ENCODE measurements at regions of chr5 and their contacts with region 1.

Region 1: DNA sequence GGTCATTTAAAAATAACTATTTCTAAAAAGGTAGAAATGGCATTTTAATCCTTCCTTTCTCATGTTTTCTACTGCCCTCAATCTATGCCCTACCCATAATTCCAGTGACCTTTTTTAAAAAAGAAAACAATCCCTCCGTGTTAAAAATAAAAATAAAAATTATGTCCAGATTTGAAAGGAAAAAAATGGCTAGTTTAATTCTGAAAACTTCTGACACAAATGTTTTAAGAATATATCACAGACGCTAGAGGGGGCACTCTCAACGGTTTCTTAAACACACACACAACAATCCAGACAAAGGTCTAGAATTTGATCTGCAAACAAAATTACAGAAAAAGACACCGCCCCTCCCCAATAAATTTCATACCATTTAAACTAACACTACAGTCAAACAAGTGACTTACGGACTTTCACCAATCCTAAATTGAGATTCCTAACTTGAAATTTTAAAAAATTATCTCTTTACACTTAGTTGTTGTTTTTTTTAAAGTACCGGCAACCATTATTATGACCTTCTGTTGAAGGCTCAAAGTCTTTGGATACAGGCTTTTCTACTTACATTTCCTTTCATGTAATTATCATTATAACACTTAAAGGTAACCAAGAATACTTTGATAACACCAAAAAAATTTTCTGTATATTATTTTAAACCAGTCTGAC is 38.2 kb downstream of the CLINT1 start:
- DNase-seq: peak in 4 of 14 experiments; percentile 36 to 62 (median 53)
- ATAC-seq: no peak
- H3K4me3 ChIP-seq: no peak overlapping the region
- H3K4me3 Mint-ChIP-seq: no peak overlapping the region
- H3K27ac ChIP-seq: no peak overlapping the region
- H3K27ac Mint-ChIP-seq: peak overlapping the region; percentile 11
- H3K4me1 ChIP-seq: no peaks in the 10 kb centered on the region
- H3K4me1 Mint-ChIP-seq: peaks cover 58% of the 10 kb centered on the region
- H3K27me3 ChIP-seq: no peaks in the 10 kb centered on the region
- H3K27me3 Mint-ChIP-seq: no peaks in the 10 kb centered on the region
- CTCF ChIP-seq: peak; percentile 61

Region 2: DNA sequence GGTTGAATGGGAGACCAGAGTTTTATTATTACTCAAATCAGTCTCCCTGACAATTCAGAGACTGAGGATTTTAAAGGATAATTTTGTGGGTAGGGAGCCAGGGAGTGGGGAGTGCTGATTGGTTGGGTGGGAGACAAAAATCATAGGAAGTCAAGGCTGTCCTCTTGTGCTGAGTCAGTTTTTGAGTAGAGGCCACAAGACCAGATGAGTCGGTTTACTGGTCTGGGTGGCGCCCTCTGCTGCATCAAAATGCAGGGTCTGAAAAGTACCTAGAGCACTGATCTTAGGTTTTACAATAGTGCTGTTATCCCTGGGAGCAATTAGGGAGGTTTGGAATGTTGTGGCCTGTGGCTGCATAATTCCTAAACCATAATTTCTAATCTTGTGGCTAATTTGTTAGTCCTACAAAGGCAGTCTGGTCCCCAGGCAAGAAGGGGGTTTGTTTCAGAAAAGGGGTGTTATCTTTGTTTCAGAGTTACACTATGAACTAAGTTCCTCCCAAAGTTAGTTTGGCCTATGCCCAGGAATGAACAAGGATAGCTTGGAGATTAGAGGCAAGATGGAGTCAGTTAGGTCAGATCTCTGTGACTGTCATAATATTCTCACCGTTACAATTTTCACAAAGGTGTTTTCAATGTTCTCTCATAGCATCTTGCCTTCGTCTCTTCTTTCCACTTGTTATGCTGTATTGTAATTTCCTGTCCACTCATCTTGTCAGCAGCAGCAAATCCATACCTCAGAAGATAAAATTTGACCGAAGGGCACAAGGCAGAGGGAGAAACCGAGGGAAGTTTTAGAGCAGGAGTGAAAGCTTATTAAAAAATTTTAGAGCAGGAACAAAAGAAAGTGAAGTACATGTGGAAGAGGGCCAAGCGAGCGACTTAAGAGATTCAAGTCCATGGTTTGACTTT is 97.4 kb after region 1 on chr5:
- CTCF ChIA-PET with region 1: no interaction called
- POLR2A ChIA-PET with region 1: no interaction called
- intact Hi-C with region 1: loop called in 1 of 2 experiments (anchors 2 kb)
- DNase-seq: peak; percentile 19 to 71 (median 44)
- ATAC-seq: peak; percentile 63
- H3K4me3 ChIP-seq: no peak overlapping the region
- H3K4me3 Mint-ChIP-seq: peak overlapping the region; percentile 9
- H3K27ac ChIP-seq: peak overlapping the region in 1 of 2 donors; percentile 8
- H3K27ac Mint-ChIP-seq: peak overlapping the region; percentile 60
- H3K4me1 ChIP-seq: peaks cover 25% of the 10 kb centered on the region
- H3K4me1 Mint-ChIP-seq: peaks cover 29% of the 10 kb centered on the region
- H3K27me3 ChIP-seq: no peaks in the 10 kb centered on the region
- H3K27me3 Mint-ChIP-seq: no peaks in the 10 kb centered on the region
- CTCF ChIP-seq: peak; percentile 32

Region 3: GRCh38 chr5:157948738-157949410 is 128.2 kb after region 1 on chr5:
- CTCF ChIA-PET with region 1: interaction called, 14 read pairs
- POLR2A ChIA-PET with region 1: interaction called, 8 read pairs
- intact Hi-C with region 1: loop called (anchors 1 kb)
- DNase-seq: peak; percentile 62 to 87 (median 72)
- ATAC-seq: peak; percentile 99
- H3K4me3 ChIP-seq: no peak overlapping the region
- H3K4me3 Mint-ChIP-seq: no peak overlapping the region
- H3K27ac ChIP-seq: no peak overlapping the region
- H3K27ac Mint-ChIP-seq: no peak overlapping the region
- H3K4me1 ChIP-seq: peaks cover 6% of the 10 kb centered on the region
- H3K4me1 Mint-ChIP-seq: peaks cover 5% of the 10 kb centered on the region
- H3K27me3 ChIP-seq: peaks cover 4% of the 10 kb centered on the region in 2 experiments
- H3K27me3 Mint-ChIP-seq: peaks cover 13% of the 10 kb centered on the region
- CTCF ChIP-seq: peak; percentile 72

Region 4: GRCh38 chr5:157994906-157995519 is 174.3 kb after region 1 on chr5:
- CTCF ChIA-PET with region 1: no interaction called
- POLR2A ChIA-PET with region 1: interaction called, 3 read pairs
- intact Hi-C with region 1: loop called (anchors 1 to 2 kb)
- DNase-seq: peak in 13 of 14 experiments; percentile 9 to 68 (median 29)
- ATAC-seq: peak; percentile 75
- H3K4me3 ChIP-seq: peak overlapping the region; percentile 20
- H3K4me3 Mint-ChIP-seq: peak overlapping the region; percentile 52
- H3K27ac ChIP-seq: no peak overlapping the region
- H3K27ac Mint-ChIP-seq: no peak overlapping the region
- H3K4me1 ChIP-seq: peaks cover 23% of the 10 kb centered on the region
- H3K4me1 Mint-ChIP-seq: peaks cover 26% of the 10 kb centered on the region
- H3K27me3 ChIP-seq: peaks cover 8 to 11% of the 10 kb centered on the region in 2 experiments
- H3K27me3 Mint-ChIP-seq: peaks cover 56% of the 10 kb centered on the region
- CTCF ChIP-seq: peak; percentile 59

Region 5: DNA sequence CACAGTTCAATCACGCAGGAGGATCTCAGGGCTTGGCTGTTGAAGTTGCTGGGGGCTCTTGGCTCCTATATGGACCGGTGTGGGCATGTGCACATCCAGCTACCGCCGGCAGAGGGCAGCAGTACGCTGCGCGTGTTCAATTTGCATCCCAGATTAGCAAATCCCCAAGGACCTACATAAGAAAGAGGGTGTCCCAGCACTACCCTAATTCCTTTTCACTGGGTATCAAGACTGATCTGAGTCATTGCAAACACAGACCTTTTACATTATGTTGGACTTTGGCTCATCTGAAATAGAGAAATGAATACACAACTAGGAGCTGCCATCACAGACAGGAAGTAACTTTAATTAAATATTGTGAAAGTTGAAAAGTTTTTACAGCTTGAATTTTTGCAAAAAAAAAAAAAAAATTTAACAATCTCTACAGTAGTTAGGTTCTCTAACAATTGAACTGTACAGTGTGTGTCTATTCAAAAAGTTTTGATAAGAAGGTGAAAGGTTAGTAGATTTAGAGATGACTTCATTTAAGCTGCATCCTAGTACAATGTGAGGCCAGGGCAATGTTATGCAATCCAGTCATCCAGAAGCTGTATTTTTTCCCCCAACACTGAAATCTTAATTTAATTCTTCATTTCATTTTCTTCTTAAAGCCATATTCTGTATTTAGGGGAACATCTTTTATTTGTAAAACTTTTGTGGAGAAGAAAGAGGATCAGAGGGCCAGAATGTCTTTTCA is 875.0 kb after region 1 on chr5:
- CTCF ChIA-PET with region 1: no interaction called
- POLR2A ChIA-PET with region 1: no interaction called
- intact Hi-C with region 1: loop called in 1 of 2 experiments (anchors 10 kb)
- DNase-seq: peak; percentile 27 to 80 (median 60)
- ATAC-seq: peak; percentile 80
- H3K4me3 ChIP-seq: no peak overlapping the region
- H3K4me3 Mint-ChIP-seq: no peak overlapping the region
- H3K27ac ChIP-seq: no peak overlapping the region
- H3K27ac Mint-ChIP-seq: no peak overlapping the region
- H3K4me1 ChIP-seq: no peaks in the 10 kb centered on the region
- H3K4me1 Mint-ChIP-seq: peaks cover 3% of the 10 kb centered on the region
- H3K27me3 ChIP-seq: no peaks in the 10 kb centered on the region
- H3K27me3 Mint-ChIP-seq: no peaks in the 10 kb centered on the region
- CTCF ChIP-seq: peak; percentile 99